GM12878 (cell line): ENCODE measurements at regions of chrX and their contacts with region 1.

Region 1: GRCh38 chrX:114959729-114960128 is 57.7 kb downstream of the IL13RA2 start:
- DNase-seq: no peak
- ATAC-seq: no peak
- H3K4me3 ChIP-seq: no peak overlapping the region
- H3K27ac ChIP-seq: no peak overlapping the region
- H3K4me1 ChIP-seq: no peaks in the 10 kb centered on the region
- H3K27me3 ChIP-seq: no peaks in the 10 kb centered on the region
- CTCF ChIP-seq: peak in 1 of 3 experiments; percentile 18; a peak in 2 of 6 replicates
- EP300 ChIP-seq: no peak
- POLR2A ChIP-seq: no peak
- RAD21 ChIP-seq: no peak

Region 2: GRCh38 chrX:114626323-114626722 is 333.4 kb before region 1 on chrX:
- CTCF ChIA-PET with region 1: interaction called, 3 read pairs
- POLR2A ChIA-PET with region 1: no interaction called
- RAD21 ChIA-PET with region 1: interaction called, 6 read pairs
- SMC1A ChIA-PET with region 1: interaction called, 3 read pairs
- in situ Hi-C with region 1: no loop called
- intact Hi-C with region 1: loop called (anchors 5 kb)
- DNase-seq: no peak
- ATAC-seq: 0 out of 3 replicates have a peak, but pooled peaks have one; percentile 43
- H3K4me3 ChIP-seq: no peak overlapping the region
- H3K27ac ChIP-seq: no peak overlapping the region
- H3K4me1 ChIP-seq: no peaks in the 10 kb centered on the region
- H3K27me3 ChIP-seq: no peaks in the 10 kb centered on the region
- CTCF ChIP-seq: peak; percentile 28 to 42 (median 28); a peak in 4 of 6 replicates
- EP300 ChIP-seq: no peak
- POLR2A ChIP-seq: no peak
- RAD21 ChIP-seq: 0 out of 2 replicates have a peak, but pooled peaks have one; percentile 29

Region 3: GRCh38 chrX:115378471-115378870 is 418.7 kb after region 1 on chrX:
- CTCF ChIA-PET with region 1: no interaction called
- POLR2A ChIA-PET with region 1: no interaction called
- RAD21 ChIA-PET with region 1: no interaction called
- SMC1A ChIA-PET with region 1: no interaction called
- in situ Hi-C with region 1: no loop called
- intact Hi-C with region 1: no loop called
- DNase-seq: no peak
- ATAC-seq: no peak
- H3K4me3 ChIP-seq: no peak overlapping the region
- H3K27ac ChIP-seq: no peak overlapping the region
- H3K4me1 ChIP-seq: no peaks in the 10 kb centered on the region
- H3K27me3 ChIP-seq: no peaks in the 10 kb centered on the region
- CTCF ChIP-seq: no peak; a peak in 1 of 6 replicates
- EP300 ChIP-seq: no peak
- POLR2A ChIP-seq: no peak
- RAD21 ChIP-seq: no peak